Mammary epithelial cell (primary cell): ENCODE measurements at regions of chr1 and their contacts with region 1.

Region 1: DNA sequence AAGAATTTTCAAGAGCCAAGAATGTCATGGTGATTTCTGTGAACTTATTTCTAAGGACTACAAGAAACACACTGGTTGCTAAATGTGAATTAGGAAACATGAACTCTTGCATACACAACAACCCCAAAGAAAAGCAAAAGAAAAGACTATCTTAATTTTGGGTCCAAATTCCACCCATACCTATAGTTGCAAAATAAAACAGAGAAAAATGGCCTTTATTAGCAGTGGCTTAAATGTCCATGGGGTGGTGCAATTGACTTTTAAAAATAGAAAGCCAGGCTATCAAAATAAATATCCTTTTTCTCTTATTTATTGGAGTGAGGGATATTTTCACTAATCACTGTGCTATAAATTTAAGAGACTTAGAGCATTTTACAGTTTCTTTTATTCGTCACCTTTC is 80.9 kb upstream of the DPYD start:
- DNase-seq: no peak
- H3K4me3 ChIP-seq: no peak overlapping the region
- H3K27ac ChIP-seq: no peak overlapping the region
- H3K4me1 ChIP-seq: peaks cover 6% of the 10 kb centered on the region
- H3K27me3 ChIP-seq: no peaks in the 10 kb centered on the region
- CTCF ChIP-seq: peak; percentile 8 to 35

Region 2: GRCh38 chr1:97565886-97566285 is 435.9 kb before region 1 on chr1:
- CTCF ChIA-PET with region 1: no interaction called
- dilution Hi-C with region 1: no loop called
- in situ Hi-C with region 1: no loop called
- intact Hi-C with region 1: no loop called
- DNase-seq: no peak
- H3K4me3 ChIP-seq: no peak overlapping the region
- H3K27ac ChIP-seq: no peak overlapping the region
- H3K4me1 ChIP-seq: no peaks in the 10 kb centered on the region
- H3K27me3 ChIP-seq: no peaks in the 10 kb centered on the region
- CTCF ChIP-seq: no peak

Region 3: GRCh38 chr1:97920832-97921571 is 80.8 kb before region 1 on chr1 and contains the start of gene DPYD:
- CTCF ChIA-PET with region 1: no interaction called
- dilution Hi-C with region 1: no loop called
- in situ Hi-C with region 1: no loop called
- intact Hi-C with region 1: no loop called
- DNase-seq: peak; percentile 81
- H3K4me3 ChIP-seq: peak within 1 kb of the TSS; percentile 73 to 100 (median 99)
- H3K27ac ChIP-seq: peak within 1 kb of the TSS; percentile 72
- H3K4me1 ChIP-seq: peaks cover 17% of the 10 kb centered on the region
- H3K27me3 ChIP-seq: no peaks in the 10 kb centered on the region
- CTCF ChIP-seq: no peak
- total RNA-seq, gene DPYD: 16.8 to 24.3 TPM

Region 4: GRCh38 chr1:97943354-97943753 is 58.4 kb before region 1 on chr1:
- CTCF ChIA-PET with region 1: no interaction called
- dilution Hi-C with region 1: no loop called
- in situ Hi-C with region 1: no loop called
- intact Hi-C with region 1: no loop called
- DNase-seq: peak; percentile 77
- H3K4me3 ChIP-seq: peak overlapping the region in 2 of 3 experiments; percentile 10 to 19
- H3K27ac ChIP-seq: no peak overlapping the region
- H3K4me1 ChIP-seq: peaks cover 30% of the 10 kb centered on the region
- H3K27me3 ChIP-seq: no peaks in the 10 kb centered on the region
- CTCF ChIP-seq: no peak

Region 5: DNA sequence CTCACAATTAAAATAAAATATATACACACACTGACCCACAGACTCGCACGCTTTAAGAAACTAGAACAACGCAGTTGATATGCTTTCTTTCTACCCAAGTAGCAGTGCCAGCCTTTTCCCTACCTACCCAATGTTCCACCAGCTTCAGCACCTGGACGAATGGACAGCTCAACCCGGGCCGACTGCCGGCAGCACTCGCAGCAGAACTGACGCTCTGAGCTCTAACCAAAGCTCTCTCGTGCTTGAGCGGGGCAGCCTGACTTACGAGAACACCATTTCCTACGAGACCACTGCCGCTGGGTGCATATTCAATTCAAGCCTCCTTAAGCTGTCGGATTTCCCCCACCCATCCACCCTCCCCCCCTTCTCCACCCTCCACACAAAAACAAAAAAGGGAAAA is 46.5 kb after region 1 on chr1:
- CTCF ChIA-PET with region 1: no interaction called
- dilution Hi-C with region 1: no loop called
- in situ Hi-C with region 1: no loop called
- intact Hi-C with region 1: loop called (anchors 1 kb)
- DNase-seq: peak; percentile 82
- H3K4me3 ChIP-seq: peak overlapping the region; percentile 22 to 32 (median 27)
- H3K27ac ChIP-seq: no peak overlapping the region
- H3K4me1 ChIP-seq: peaks cover 13% of the 10 kb centered on the region
- H3K27me3 ChIP-seq: no peaks in the 10 kb centered on the region
- CTCF ChIP-seq: no peak

Region 6: DNA sequence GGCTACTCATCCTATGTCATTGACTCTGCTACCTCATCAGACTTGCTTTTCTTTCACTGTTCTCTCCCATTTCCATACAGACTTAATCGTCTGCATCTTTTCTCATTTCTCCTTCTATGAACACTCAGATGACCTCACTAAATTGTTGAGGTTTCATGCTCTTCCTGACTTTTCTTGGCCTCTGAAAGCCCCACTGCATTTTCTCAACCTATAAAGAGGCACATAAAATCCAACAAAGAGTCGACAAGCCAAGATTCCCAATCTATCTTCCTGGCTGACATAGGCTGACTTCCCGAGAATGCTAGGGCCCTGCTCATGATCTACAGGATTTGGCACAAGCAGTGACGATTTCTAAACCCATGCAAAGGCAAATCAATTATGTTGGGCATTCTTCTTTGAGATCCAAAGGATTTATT is 199.9 kb after region 1 on chr1:
- CTCF ChIA-PET with region 1: no interaction called
- dilution Hi-C with region 1: no loop called
- in situ Hi-C with region 1: no loop called
- intact Hi-C with region 1: no loop called
- DNase-seq: no peak
- H3K4me3 ChIP-seq: no peak overlapping the region
- H3K27ac ChIP-seq: no peak overlapping the region
- H3K4me1 ChIP-seq: no peaks in the 10 kb centered on the region
- H3K27me3 ChIP-seq: no peaks in the 10 kb centered on the region
- CTCF ChIP-seq: no peak